MCF 10A (cell line): ENCODE measurements at regions of chr20 and their contacts with region 1.

Region 1: DNA sequence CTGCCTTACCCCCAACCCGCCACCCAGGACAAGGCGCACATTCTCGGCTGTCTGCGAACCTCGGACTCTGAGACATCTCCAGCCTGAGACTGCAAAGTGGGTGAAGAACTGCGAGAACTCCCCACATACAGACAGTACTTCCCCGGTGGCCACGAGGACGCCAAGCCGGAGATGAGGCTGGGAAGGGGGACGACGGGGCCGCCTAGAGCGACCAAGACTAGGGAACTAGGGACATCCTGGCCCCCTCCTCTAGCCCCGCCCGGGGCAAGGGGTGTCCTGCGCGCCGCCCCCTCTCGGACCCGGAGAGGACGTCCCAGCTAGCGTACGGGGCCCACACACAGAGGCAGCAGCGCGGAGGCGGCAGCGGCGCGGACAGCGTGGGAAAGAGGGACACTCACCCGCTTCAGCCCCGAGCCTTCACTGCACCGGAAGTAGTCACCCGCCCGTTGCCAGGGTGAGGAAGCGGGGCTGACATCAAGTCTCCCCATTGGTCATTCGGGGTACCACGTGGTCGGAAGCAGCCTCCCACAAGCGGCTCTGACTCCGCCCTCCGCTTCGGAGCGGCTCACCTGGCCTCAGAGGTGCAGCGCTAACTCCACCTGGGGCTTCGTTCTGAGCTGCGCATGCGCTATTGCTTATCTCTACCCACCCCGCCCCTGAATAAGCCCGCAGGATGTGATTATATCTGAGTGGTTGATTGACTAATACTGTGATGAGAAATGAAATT is at the start of gene TASP1:
- DNase-seq: peak; percentile 98
- H3K4me3 Mint-ChIP-seq: peak within 1 kb of the TSS; percentile 81
- H3K27ac Mint-ChIP-seq: peak within 1 kb of the TSS; percentile 77
- H3K4me1 Mint-ChIP-seq: peaks cover 4% of the 10 kb centered on the region
- H3K27me3 Mint-ChIP-seq: no peaks in the 10 kb centered on the region
- CTCF ChIP-seq: no peak
- total RNA-seq, gene TASP1: 18.7 and 19.0 TPM in 2 replicates

Region 2: DNA sequence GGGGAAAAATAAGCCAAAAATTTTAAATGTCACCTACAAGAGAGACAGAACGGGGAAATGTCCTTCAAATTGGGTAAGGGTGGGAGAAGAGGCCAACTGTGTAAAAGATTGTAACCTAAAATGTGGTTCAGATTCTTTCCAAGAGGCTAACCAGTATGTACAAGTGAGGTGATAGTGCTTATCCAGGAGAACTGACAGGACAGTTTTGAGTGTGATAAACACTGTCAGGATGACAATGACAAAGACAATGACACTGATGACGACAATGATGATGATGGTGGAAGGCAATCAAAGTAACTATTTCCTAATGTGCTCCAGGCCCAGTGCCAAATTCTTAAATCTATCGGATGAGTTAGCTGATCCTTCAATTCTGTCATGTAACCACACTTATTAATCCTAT is 57.2 kb before region 1 on chr20:
- CTCF ChIA-PET with region 1: no interaction called
- POLR2A ChIA-PET with region 1: no interaction called
- intact Hi-C with region 1: no loop called
- DNase-seq: no peak
- H3K4me3 Mint-ChIP-seq: no peak overlapping the region
- H3K27ac Mint-ChIP-seq: no peak overlapping the region
- H3K4me1 Mint-ChIP-seq: no peaks in the 10 kb centered on the region
- H3K27me3 Mint-ChIP-seq: no peaks in the 10 kb centered on the region
- CTCF ChIP-seq: no peak

Region 3: DNA sequence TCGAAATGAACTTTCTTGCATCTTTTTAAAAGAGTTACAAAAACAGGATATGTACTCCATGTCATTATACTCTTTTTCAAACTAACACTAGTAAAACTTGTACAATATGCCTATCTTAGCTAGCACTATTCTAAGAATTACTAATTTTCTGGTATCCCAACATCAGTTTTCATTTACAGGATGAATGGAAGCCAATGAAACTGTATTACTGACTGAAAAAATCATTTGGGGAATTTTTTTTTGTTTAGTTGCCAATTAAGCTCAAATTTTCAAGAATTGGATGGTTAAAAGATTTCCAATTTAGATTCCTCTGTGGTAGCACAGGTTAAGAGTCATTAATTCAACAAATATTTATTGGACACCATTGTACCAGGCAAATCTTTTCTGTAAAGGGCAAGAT is 30.6 kb before region 1 on chr20:
- CTCF ChIA-PET with region 1: interaction called, 3 read pairs
- POLR2A ChIA-PET with region 1: interaction called, 10 read pairs
- intact Hi-C with region 1: no loop called
- DNase-seq: no peak
- H3K4me3 Mint-ChIP-seq: no peak overlapping the region
- H3K27ac Mint-ChIP-seq: no peak overlapping the region
- H3K4me1 Mint-ChIP-seq: no peaks in the 10 kb centered on the region
- H3K27me3 Mint-ChIP-seq: no peaks in the 10 kb centered on the region
- CTCF ChIP-seq: no peak

Region 4: GRCh38 chr20:13777171-13777601 is 138.5 kb after region 1 on chr20:
- CTCF ChIA-PET with region 1: interaction called, 3 read pairs
- POLR2A ChIA-PET with region 1: interaction called, 14 read pairs
- intact Hi-C with region 1: loop called (anchors 10 kb)
- DNase-seq: peak; percentile 42
- H3K4me3 Mint-ChIP-seq: peak overlapping the region; percentile 43
- H3K27ac Mint-ChIP-seq: peak overlapping the region; percentile 63
- H3K4me1 Mint-ChIP-seq: peaks cover 38% of the 10 kb centered on the region
- H3K27me3 Mint-ChIP-seq: no peaks in the 10 kb centered on the region
- CTCF ChIP-seq: no peak